WTC11 (cell line): ENCODE measurements at regions of chr2 and their contacts with region 1.

Region 1: GRCh38 chr2:236550701-236551465 is 18.7 kb upstream of the ACKR3 start:
- DNase-seq: no peak
- ATAC-seq: no peak
- H3K4me3 Mint-ChIP-seq: no peak overlapping the region
- H3K27ac Mint-ChIP-seq: no peak overlapping the region
- H3K4me1 Mint-ChIP-seq: peaks cover 29% of the 10 kb centered on the region
- H3K27me3 Mint-ChIP-seq: no peaks in the 10 kb centered on the region
- CTCF ChIP-seq: no peak

Region 2: DNA sequence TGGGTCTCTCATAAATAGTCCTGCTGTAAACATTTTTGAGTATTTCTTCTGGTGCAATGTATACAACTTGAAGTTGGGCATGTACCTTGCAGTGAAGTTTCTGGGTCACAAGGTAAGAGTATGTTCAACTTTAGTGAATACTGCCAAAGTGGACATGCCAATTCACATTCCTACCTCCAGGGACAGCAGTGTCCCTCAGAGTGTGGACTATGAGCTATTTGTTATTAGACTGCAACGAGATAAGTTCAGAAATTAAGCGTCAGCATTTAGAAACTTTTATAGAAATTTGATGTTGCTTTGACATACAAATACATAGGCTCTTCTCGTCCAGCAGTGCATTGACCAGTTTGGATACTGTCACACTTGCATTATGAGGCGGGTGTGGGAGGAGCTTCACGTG is 11.6 kb after region 1 on chr2:
- CTCF ChIA-PET with region 1: interaction called, 12 read pairs
- POLR2A ChIA-PET with region 1: no interaction called
- DNase-seq: peak; percentile 34
- ATAC-seq: peak; percentile 28; the same call in 1 of the 2 replicates
- H3K4me3 Mint-ChIP-seq: no peak overlapping the region
- H3K27ac Mint-ChIP-seq: no peak overlapping the region
- H3K4me1 Mint-ChIP-seq: peaks cover 30% of the 10 kb centered on the region
- H3K27me3 Mint-ChIP-seq: peaks cover 25% of the 10 kb centered on the region
- CTCF ChIP-seq: peak; percentile 75

Region 3: DNA sequence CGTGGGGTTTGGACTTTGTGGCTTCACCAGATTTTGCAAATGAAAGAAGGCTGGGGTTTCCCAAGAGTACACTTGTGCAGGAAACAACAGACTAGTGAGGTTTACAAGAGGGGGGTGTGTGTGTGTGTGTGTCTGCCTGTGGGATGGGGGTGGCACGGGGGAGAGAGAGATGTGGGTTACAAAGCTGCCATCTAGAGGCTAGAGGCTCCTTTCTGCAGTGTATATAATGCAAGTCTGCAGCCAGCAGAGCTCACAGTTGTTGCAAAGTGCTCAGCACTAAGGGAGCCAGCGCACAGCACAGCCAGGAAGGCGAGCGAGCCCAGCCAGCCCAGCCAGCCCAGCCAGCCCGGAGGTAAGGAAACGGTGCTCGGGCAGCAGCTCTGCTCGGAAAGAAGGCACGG is 18.7 kb after region 1 on chr2 and contains the start of gene ACKR3:
- CTCF ChIA-PET with region 1: interaction called, 12 read pairs
- POLR2A ChIA-PET with region 1: no interaction called
- DNase-seq: peak; percentile 77
- ATAC-seq: peak; percentile 84
- H3K4me3 Mint-ChIP-seq: peak within 1 kb of the TSS; percentile 72
- H3K27ac Mint-ChIP-seq: peak within 1 kb of the TSS; percentile 68
- H3K4me1 Mint-ChIP-seq: peaks cover 79% of the 10 kb centered on the region
- H3K27me3 Mint-ChIP-seq: peaks cover 46% of the 10 kb centered on the region
- CTCF ChIP-seq: no peak
- total RNA-seq, gene ACKR3: 0.94 to 1.4 TPM (median 1.3 TPM) in 3 replicates

Region 4: DNA sequence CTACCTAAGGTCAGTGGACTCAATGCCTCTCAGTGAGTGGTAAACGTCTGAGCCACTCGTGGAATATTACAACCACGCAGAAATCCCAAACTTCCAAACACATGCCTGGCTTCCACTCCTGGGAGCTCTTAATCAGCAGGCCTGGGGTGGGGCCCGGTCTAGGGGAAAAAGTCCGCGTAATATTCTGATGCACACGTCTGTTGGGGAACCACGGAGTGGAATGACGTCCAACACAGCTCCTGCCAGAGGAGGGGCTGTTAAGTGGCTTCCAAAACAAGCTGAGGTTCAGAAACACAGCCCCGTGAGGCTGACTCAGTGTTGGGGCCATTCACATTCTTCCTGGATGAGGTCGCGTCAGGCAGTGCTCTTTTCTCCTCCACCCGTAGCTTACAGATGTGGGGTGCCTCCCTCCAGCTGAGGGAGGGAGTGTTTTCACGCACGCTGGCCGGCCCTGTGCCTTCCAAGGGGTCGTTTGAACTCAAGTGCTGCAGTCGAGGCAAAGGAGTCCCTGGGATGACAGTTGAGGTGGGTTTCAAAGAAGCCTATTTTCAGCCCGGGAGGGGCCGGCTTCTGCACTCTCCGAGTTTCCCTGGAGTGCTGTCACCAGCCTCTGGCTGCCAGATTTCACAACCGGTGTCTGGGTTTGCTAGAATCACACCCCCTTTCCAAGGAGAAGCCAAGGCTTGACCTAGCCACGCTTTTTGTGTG is 91.9 kb after region 1 on chr2:
- CTCF ChIA-PET with region 1: no interaction called
- POLR2A ChIA-PET with region 1: no interaction called
- DNase-seq: no peak
- ATAC-seq: peak; percentile 74
- H3K4me3 Mint-ChIP-seq: no peak overlapping the region
- H3K27ac Mint-ChIP-seq: no peak overlapping the region
- H3K4me1 Mint-ChIP-seq: peaks cover 15% of the 10 kb centered on the region
- H3K27me3 Mint-ChIP-seq: no peaks in the 10 kb centered on the region
- CTCF ChIP-seq: no peak